ENCODE measurements at regions of chrX and their contacts with region 1.

Region 1: DNA sequence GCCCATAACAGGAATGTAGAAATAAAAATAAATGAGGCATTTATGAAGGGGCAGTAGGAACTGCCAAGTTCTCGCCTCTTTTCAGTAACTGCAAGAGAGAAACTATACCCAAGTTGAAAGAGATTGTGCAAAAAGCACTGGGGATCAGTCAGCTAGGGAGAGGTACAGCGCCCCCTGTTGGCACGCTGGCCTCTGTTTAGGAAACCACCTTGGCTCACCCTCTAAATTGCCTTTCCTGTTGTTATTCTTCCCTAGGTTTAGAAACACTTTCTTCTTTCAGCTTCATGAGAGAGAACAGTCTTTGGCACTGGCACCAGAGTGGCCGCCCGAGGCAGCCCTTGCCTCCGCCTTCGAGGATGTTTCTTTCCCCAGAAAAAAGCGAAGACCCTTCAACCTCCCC is 348.5 kb downstream of the MID1IP1 start:
- DNase-seq: peak; percentile 19
- H3K4me3 ChIP-seq: no peak overlapping the region
- H3K27ac ChIP-seq: no peak overlapping the region
- H3K4me1 ChIP-seq: no peaks in the 10 kb centered on the region
- H3K27me3 ChIP-seq: peaks cover 0 to 3% of the 10 kb centered on the region in 2 experiments
- CTCF ChIP-seq: peak; percentile 55 to 68
- POLR2A ChIP-seq: no peak

Region 2: GRCh38 chrX:38664285-38664684 is 485.5 kb before region 1 on chrX:
- CTCF ChIA-PET with region 1: interaction called, 4 read pairs
- POLR2A ChIA-PET with region 1: no interaction called
- dilution Hi-C with region 1: no loop called
- intact Hi-C with region 1: loop called (anchors 1 kb)
- DNase-seq: peak; percentile 20
- H3K4me3 ChIP-seq: no peak overlapping the region
- H3K27ac ChIP-seq: no peak overlapping the region
- H3K4me1 ChIP-seq: no peaks in the 10 kb centered on the region
- H3K27me3 ChIP-seq: no peaks in the 10 kb centered on the region
- CTCF ChIP-seq: peak in 1 of 2 donors; percentile 26
- POLR2A ChIP-seq: no peak

Region 3: DNA sequence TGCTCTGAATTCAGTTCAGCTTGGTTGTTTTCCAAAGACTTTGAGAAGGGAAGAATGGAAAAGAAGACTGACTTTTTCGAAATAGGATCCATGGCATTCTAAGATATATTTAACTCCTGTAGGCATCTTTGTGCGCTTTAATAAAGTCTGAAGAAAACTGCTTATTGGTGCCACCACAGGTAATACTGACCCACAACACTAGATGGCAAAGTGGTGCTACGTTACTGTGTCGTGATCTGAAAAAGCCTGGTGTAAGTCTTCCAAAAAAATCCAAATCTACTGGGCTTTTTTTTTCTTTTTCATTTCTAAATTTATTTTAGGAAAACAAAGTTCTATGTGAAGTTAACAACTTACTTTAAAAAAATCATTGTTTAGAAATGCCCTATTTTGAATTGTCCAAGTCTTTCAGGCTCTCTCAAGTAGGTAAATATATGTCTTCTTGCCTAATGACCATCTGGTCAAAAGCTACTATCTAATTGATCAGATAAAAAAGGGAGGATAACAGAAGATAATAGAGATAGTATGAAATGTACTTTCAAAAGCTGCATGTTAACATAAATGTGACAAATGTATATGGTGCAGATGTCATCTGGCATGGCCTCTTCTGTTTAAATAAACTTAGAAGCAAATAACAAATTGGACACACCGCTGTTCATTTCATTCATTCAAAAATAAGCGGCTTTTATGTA is 395.5 kb before region 1 on chrX:
- CTCF ChIA-PET with region 1: interaction called, 19 read pairs
- POLR2A ChIA-PET with region 1: no interaction called
- dilution Hi-C with region 1: no loop called
- intact Hi-C with region 1: loop called (anchors 1 kb)
- DNase-seq: peak; percentile 62
- H3K4me3 ChIP-seq: no peak overlapping the region
- H3K27ac ChIP-seq: no peak overlapping the region
- H3K4me1 ChIP-seq: no peaks in the 10 kb centered on the region
- H3K27me3 ChIP-seq: peaks cover 0 to 2% of the 10 kb centered on the region in 2 experiments
- CTCF ChIP-seq: peak; percentile 33 to 46
- POLR2A ChIP-seq: no peak

Region 4: DNA sequence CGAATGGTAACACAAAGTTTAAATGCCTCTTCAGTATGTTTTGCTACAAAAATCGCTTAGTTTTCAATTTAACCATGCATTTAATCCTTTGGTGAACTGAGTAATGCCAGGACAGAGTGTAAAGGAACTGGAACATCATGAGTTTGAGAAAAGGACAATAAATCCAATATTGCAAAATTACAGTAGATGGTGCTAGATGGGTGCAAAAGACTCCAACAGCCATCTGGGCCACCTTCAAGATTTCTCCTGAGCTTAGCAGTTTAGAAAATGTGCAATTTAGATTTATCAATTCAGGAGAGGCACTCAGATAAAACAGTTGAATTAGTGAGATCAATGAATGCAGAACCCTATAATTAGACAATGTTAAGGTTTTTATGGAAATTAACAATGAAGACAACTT is 381.7 kb before region 1 on chrX:
- CTCF ChIA-PET with region 1: interaction called, 29 read pairs
- POLR2A ChIA-PET with region 1: no interaction called
- dilution Hi-C with region 1: no loop called
- intact Hi-C with region 1: loop called (anchors 1 kb)
- DNase-seq: peak; percentile 15
- H3K4me3 ChIP-seq: no peak overlapping the region
- H3K27ac ChIP-seq: no peak overlapping the region
- H3K4me1 ChIP-seq: no peaks in the 10 kb centered on the region
- H3K27me3 ChIP-seq: peaks cover 0 to 4% of the 10 kb centered on the region in 2 experiments
- CTCF ChIP-seq: no peak
- POLR2A ChIP-seq: no peak

Region 5: DNA sequence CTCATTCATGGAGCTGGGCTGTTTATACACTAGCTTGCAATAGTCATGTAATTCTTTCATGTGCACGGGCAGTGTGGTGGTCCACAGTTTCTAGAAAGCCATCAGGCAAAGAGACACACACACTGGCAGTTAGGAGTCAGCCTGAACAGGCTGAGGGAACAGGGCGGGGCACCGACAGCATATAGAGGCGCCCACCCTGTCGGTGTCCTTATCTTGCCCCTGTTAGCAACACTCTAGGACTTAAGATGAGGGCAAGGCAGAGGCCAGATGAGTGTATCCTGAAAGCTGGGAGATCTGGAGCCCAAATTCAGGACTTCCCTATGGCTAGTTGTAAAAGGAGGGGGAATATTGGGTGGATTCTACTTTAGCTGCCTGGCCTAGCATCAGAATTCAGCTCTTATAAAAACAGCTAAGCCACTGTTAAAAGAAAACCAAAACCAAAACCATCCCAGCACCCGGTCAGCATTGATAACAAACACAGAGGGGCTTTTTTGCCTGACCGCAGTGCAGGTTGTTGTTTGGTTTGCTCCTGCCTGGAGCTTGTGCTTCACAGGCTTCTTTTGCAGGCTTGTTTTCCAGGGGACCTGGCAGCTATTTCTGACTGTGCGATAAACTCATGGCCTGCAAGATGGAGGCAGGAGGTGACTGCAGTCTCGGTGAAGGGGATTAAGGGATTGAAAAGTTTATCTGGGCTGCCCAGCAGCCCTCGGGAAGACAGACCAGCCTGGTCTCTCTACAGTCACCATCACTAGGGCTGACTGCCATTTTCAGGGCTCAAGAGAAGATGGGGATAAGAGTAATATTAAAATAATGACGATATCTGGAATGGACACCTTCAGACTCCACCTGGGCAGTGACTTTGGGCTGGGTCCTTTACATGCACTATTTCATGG is 290.4 kb after region 1 on chrX:
- CTCF ChIA-PET with region 1: no interaction called
- POLR2A ChIA-PET with region 1: no interaction called
- dilution Hi-C with region 1: no loop called
- intact Hi-C with region 1: loop called (anchors 10 kb)
- DNase-seq: no peak
- H3K4me3 ChIP-seq: no peak overlapping the region
- H3K27ac ChIP-seq: no peak overlapping the region
- H3K4me1 ChIP-seq: no peaks in the 10 kb centered on the region
- H3K27me3 ChIP-seq: no peaks in the 10 kb centered on the region
- CTCF ChIP-seq: no peak
- POLR2A ChIP-seq: no peak